IMR-90 (cell line): ENCODE measurements at regions of chr16 and their contacts with region 1.

Region 1: GRCh38 chr16:76639685-76640289 is 362.6 kb downstream of the CNTNAP4 start:
- DNase-seq: peak; percentile 1
- ATAC-seq: no peak
- H3K4me3 ChIP-seq: no peak overlapping the region
- H3K27ac ChIP-seq: no peak overlapping the region
- H3K4me1 ChIP-seq: no peaks in the 10 kb centered on the region
- H3K27me3 ChIP-seq: no peaks in the 10 kb centered on the region
- CTCF ChIP-seq: no peak
- POLR2A ChIP-seq: no peak
- RAD21 ChIP-seq: no peak

Region 2: GRCh38 chr16:76622876-76623275 is 16.9 kb before region 1 on chr16:
- CTCF ChIA-PET with region 1: no interaction called
- POLR2A ChIA-PET with region 1: no interaction called
- dilution Hi-C with region 1: no loop called
- in situ Hi-C with region 1: no loop called
- intact Hi-C with region 1: loop called (anchors 1 kb)
- DNase-seq: no peak
- ATAC-seq: no peak
- H3K4me3 ChIP-seq: no peak overlapping the region
- H3K27ac ChIP-seq: no peak overlapping the region
- H3K4me1 ChIP-seq: no peaks in the 10 kb centered on the region
- H3K27me3 ChIP-seq: no peaks in the 10 kb centered on the region
- CTCF ChIP-seq: no peak
- POLR2A ChIP-seq: no peak
- RAD21 ChIP-seq: no peak